ENCODE measurements at regions of chr17 and their contacts with region 1.

Region 1: DNA sequence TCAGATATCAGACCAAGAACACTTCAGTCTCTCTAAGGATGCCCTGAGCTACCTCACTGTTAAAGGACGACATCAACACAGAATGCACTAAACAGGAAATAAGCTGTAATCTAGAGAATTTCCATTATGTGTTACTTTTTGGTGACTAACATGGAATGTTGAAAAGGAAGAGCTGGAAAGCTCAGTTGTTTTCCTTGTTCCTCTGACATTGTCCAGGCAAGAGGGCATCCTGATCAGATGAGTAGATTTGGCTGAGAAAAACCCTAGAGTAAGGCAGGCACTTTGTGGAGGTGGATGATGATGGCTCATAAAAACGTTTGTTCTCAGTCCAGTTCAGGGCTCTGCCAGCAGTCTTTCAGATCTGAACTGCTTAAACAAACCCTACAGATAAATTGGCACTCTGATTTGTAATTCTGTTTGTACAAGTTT is 34.0 kb downstream of the DGKE start:
- DNase-seq: no peak
- ATAC-seq: no peak
- H3K4me3 Mint-ChIP-seq: no peak overlapping the region
- H3K27ac Mint-ChIP-seq: no peak overlapping the region
- H3K4me1 Mint-ChIP-seq: no peaks in the 10 kb centered on the region
- H3K27me3 Mint-ChIP-seq: no peaks in the 10 kb centered on the region
- CTCF ChIP-seq: no peak

Region 2: GRCh38 chr17:56833809-56834379 is 34.1 kb before region 1 on chr17 and contains the starts of genes C17orf67 and DGKE:
- CTCF ChIA-PET with region 1: interaction called, 3 read pairs
- POLR2A ChIA-PET with region 1: interaction called, 11 read pairs
- DNase-seq: peak; percentile 98
- ATAC-seq: peak; percentile 92
- H3K4me3 Mint-ChIP-seq: peak within 1 kb of the TSS; percentile 83
- H3K27ac Mint-ChIP-seq: no peak within 1 kb of the TSS
- H3K4me1 Mint-ChIP-seq: peaks cover 54% of the 10 kb centered on the region
- H3K27me3 Mint-ChIP-seq: peaks cover 19% of the 10 kb centered on the region
- CTCF ChIP-seq: no peak
- total RNA-seq, gene C17orf67: 3.0 to 3.4 TPM (median 3.3 TPM) in 3 replicates
- total RNA-seq, gene DGKE: 8.5 to 9.4 TPM (median 9.3 TPM) in 3 replicates

Region 3: GRCh38 chr17:56853905-56854304 is 14.1 kb before region 1 on chr17:
- CTCF ChIA-PET with region 1: no interaction called
- POLR2A ChIA-PET with region 1: no interaction called
- DNase-seq: no peak
- ATAC-seq: no peak
- H3K4me3 Mint-ChIP-seq: no peak overlapping the region
- H3K27ac Mint-ChIP-seq: no peak overlapping the region
- H3K4me1 Mint-ChIP-seq: no peaks in the 10 kb centered on the region
- H3K27me3 Mint-ChIP-seq: no peaks in the 10 kb centered on the region
- CTCF ChIP-seq: no peak

Region 4: DNA sequence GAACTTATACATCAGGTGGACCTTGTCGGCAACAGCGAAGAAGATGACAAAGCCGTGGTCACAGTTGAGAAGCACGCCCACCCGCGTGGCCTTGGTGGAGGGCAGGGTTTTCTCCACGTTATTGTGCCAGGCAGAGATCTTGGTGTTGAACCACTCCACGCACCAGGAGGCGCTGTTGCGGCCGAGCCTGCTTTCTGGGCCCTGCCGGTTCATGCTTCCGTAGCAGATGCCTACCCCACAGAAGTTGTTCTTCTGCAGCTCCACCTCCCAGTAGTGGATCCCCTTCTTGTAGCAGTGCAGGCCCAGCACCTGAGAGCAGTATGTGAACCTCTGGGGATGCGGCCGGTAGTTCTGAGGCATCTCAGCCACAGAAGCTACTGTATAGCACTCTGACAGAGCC is 23.8 kb after region 1 on chr17:
- CTCF ChIA-PET with region 1: no interaction called
- POLR2A ChIA-PET with region 1: no interaction called
- DNase-seq: peak; percentile 79
- ATAC-seq: peak; percentile 86
- H3K4me3 Mint-ChIP-seq: no peak overlapping the region
- H3K27ac Mint-ChIP-seq: no peak overlapping the region
- H3K4me1 Mint-ChIP-seq: peaks cover 13% of the 10 kb centered on the region
- H3K27me3 Mint-ChIP-seq: no peaks in the 10 kb centered on the region
- CTCF ChIP-seq: peak; percentile 72